Activated CD8-positive, alpha-beta memory T cell treated with anti-CD3 and anti-CD28 coated beads, Interleukin-2, amount 10 ng/mL, durations not matched to agents 7 days and 5 days (primary cell): ENCODE measurements at regions of chr7 and their contacts with region 1.

Region 1: DNA sequence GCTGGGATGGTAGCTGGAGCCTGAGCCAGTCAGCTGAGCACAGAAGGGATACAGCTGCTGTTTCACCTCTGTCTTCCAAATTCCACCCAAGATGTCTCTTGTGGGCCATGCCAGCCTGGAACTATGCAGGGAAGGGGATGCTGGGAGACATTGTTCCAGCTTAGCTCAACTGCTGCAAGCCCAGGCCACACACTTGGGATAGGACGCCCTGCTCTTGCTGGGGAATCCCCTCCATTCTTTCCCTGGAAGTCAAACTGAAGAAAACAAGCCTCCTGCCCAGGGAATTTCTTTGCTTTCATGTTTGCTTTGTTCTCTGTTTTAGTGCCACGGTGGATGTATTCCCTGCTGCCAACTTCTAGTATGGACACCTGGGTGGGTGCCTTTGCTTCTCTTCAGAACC is 55.2 kb upstream of the CDK13 start:
- DNase-seq: no peak
- ATAC-seq: no peak
- H3K4me3 Mint-ChIP-seq: no peak overlapping the region
- H3K27ac Mint-ChIP-seq: no peak overlapping the region
- H3K4me1 Mint-ChIP-seq: no peaks in the 10 kb centered on the region
- H3K27me3 Mint-ChIP-seq: peaks cover 23% of the 10 kb centered on the region

Region 2: DNA sequence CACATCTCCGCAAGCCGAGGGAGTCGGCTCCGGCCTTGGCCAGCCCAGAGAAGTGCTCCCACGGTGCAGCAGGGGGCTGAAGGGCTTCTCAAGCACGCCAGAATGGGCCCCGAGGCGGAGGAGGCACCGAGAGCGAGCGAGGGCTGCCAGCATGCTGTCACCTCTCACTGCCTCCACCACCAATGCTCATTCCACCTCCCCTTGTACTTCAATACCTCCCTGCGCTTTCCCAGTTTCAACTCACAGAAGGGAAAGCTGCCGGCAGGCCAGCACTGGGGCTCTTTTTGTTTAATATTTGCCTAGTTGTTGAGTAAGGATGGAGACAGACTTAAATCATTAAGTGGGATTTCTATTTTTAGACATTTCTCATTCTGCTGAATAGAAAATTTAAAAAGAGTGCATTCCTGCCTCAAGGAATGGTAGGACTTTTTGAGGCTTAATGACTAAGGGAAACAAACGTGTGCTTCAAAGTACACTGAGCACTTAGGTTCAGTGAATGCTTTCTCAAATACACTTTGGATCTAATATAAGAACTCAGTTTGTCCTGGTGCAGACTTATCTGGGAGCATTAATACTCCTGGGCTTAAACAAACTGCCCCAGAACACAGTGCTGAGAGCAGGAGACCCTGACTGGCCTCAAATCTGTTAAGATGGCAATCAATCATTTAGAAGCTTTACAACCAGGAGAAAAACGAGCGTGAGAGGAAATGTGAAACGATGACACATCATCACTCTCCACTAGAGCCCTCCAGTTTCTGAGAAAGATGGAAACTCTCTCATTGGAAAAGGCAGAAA is 140.4 kb before region 1 on chr7:
- CTCF ChIA-PET with region 1: no interaction called
- DNase-seq: no peak
- ATAC-seq: no peak
- H3K4me3 Mint-ChIP-seq: no peak overlapping the region
- H3K27ac Mint-ChIP-seq: no peak overlapping the region
- H3K4me1 Mint-ChIP-seq: peaks cover 9% of the 10 kb centered on the region
- H3K27me3 Mint-ChIP-seq: no peaks in the 10 kb centered on the region

Region 3: DNA sequence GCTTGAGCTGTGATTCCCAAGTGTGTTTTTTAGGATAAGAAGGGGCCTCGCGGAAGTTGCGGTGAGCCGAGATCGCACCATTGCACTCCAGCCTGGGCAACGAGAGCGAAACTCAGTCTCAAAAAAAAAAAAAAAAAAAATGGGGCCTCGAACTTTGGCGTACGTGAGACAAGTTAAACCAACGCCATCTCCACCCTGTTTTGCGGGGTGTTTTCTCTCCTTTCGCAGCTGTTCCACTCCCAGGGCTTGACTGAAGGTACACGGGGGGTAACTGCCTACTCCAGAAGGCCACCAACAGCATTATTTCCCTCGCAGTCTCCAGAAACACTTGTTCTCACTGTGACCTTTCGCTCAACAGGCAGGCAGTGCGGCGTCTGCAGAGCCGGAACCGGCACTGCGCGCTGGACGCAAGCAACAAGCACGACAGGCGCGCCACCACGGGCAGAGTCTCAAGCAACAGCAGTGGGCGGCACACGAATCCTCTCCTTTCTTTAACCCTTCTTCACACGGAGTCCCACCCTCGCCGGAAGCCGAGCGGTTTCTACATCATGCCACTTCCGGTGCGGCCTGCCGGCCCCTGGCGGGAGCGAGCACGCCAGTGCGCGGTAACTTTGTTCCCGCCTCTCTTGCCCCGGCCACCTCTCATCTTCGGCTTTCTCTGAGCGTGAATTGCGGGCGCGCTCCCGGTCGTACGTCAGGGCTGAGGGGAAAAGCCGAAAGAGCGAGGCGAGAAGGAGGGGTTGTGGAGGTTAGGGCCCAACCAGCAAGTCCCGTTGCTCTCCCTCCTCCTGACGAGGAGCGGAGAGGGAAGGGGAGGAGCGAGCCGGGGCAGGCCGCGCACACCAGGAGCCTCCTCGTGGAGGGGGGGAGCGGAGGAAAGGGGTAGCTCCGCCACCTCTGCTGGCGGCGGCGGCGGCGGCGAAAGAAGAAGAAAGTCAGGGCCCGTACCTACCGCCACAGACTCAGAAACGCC is 54.3 kb after region 1 on chr7:
- CTCF ChIA-PET with region 1: interaction called, 18 read pairs
- DNase-seq: peak; percentile 98
- ATAC-seq: peak; percentile 75
- H3K4me3 Mint-ChIP-seq: peak overlapping the region; percentile 98
- H3K27ac Mint-ChIP-seq: peak overlapping the region; percentile 100
- H3K4me1 Mint-ChIP-seq: peaks cover 34% of the 10 kb centered on the region
- H3K27me3 Mint-ChIP-seq: peaks cover 4% of the 10 kb centered on the region

Region 4: GRCh38 chr7:39954694-39955093 is 59.8 kb after region 1 on chr7:
- CTCF ChIA-PET with region 1: interaction called, 10 read pairs
- DNase-seq: no peak
- ATAC-seq: no peak
- H3K4me3 Mint-ChIP-seq: no peak overlapping the region
- H3K27ac Mint-ChIP-seq: no peak overlapping the region
- H3K4me1 Mint-ChIP-seq: peaks cover 35% of the 10 kb centered on the region
- H3K27me3 Mint-ChIP-seq: no peaks in the 10 kb centered on the region

Region 5: DNA sequence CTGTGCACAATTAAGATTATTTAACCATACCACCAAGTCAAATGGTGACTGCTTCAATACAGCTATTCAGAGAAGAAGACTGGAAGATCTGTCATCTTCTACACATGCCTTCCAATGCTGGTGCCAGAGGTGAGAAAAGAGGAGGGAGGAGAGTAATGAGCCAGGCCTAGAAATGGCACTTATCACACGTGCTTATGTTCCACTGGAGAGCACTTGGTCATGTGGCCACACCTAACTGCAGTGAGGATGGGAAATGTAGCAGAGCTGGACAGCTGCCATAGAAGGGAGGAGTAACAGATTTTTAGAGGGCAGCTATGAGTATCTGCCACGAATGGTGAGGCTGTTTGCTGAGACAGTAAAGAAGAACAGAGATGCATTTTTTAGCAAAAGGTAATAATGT is 162.4 kb after region 1 on chr7:
- CTCF ChIA-PET with region 1: interaction called, 133 read pairs
- DNase-seq: no peak
- ATAC-seq: no peak
- H3K4me3 Mint-ChIP-seq: no peak overlapping the region
- H3K27ac Mint-ChIP-seq: no peak overlapping the region
- H3K4me1 Mint-ChIP-seq: peaks cover 6% of the 10 kb centered on the region
- H3K27me3 Mint-ChIP-seq: no peaks in the 10 kb centered on the region

Region 6: DNA sequence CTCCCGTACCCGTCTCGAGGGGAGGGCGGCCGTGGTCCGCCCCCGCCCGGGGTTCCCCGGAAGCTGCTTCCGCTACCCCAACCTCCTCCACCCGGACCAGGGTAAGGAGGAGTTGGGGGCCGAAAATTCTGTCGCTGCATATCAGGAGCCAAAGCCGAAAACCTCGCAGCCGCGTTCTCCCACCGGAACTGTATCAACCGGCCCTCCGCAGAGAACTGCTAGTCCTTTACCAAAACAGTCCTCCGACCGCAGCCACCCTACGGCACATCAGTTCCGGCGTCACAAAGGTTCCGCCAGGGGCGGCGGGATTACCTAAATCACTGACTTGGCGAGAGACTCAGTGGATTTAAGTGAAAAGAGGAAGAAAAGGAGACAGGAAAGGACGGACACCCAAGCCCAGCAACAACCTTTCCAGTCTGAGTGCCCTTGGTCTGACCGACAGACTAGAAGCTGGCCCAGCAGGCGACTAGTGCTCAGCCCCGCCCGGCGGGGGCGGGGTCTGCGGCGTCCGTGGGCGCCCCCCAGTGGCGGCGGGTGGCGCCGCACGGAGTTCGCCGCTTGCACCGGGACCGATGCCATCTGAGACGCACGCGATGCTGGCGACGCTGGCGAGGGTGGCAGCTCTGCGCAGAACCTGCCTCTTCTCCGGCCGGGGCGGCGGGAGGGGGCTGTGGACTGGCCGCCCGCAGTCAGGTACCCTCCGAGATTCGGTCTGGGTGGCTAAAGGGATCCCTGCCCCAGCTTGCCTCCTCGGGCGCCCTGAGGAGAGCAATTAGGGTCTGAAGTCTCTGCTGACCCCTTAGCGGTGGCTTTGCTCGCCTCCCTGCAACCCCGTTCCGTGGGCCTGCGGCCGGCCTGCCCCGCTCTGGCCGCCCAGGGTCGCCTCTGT is 239.8 kb after region 1 on chr7 and contains the starts of genes MPLKIP and SUGCT:
- CTCF ChIA-PET with region 1: interaction called, 17 read pairs
- DNase-seq: peak; percentile 90
- ATAC-seq: peak; percentile 89
- H3K4me3 Mint-ChIP-seq: peak within 1 kb of the TSS; percentile 86
- H3K27ac Mint-ChIP-seq: peak within 1 kb of the TSS; percentile 91
- H3K4me1 Mint-ChIP-seq: peaks cover 26% of the 10 kb centered on the region
- H3K27me3 Mint-ChIP-seq: peaks cover 2% of the 10 kb centered on the region
- total RNA-seq, gene MPLKIP: 36.1 to 38.9 TPM
- total RNA-seq, gene SUGCT: 0.21 to 0.61 TPM